ENCODE measurements at regions of chr3 and their contacts with region 1.

Region 1: DNA sequence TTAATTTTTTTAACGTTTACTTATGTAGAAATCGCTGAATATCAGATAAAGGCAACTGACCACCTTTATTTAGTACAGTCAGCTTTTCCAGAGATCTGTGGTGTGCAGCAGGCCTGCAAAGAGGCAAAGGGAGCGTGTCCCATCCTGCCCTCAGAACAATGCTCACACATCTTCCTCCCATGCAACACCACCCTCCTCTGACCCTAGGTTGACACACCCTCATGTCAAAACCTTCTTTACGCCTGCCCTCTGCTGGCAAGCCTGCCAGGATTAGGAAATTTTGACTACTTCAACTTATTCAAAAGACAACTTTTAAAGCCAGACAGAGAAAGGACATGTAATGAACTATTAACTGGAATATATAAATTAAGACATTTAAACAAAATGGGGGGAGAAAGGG is 513.7 kb downstream of the FOXP1 start:
- DNase-seq: peak; percentile 89
- H3K4me3 Mint-ChIP-seq: no peak overlapping the region
- H3K27ac Mint-ChIP-seq: no peak overlapping the region
- H3K4me1 Mint-ChIP-seq: peaks cover 57% of the 10 kb centered on the region
- H3K27me3 Mint-ChIP-seq: no peaks in the 10 kb centered on the region

Region 2: DNA sequence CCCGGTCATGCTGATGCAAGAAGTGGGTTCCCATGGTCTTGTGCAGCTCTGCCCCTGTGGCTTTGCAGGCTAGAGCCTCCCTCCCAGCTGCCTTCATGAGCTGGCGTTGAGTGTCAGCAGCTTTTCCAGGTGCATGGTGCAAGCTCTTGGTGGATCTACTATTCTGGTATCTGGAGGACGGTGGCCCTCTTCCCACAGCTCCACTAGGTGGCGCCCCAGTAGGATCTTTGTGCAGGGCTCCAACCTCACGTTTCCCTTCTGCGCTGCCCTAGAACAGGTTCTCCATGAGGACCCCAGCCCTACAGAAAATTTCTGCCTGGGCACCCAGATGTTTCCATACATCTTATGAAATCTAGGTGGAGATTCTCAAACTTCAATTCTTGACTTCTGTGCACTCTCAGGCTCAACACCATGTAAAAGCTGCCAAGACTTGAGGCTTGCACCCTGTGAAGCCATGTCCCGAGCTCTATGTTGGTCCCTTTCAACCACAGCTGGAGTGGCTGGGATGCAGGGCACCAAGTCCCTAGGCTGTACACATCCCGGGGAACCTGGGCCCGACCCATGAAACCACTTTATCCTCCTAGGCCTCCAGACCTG is 519.0 kb before region 1 on chr3:
- intact Hi-C with region 1: loop called (anchors 2 kb)
- DNase-seq: peak; percentile 90
- H3K4me3 Mint-ChIP-seq: no peak overlapping the region
- H3K27ac Mint-ChIP-seq: no peak overlapping the region
- H3K4me1 Mint-ChIP-seq: no peaks in the 10 kb centered on the region
- H3K27me3 Mint-ChIP-seq: peaks cover 12% of the 10 kb centered on the region

Region 3: DNA sequence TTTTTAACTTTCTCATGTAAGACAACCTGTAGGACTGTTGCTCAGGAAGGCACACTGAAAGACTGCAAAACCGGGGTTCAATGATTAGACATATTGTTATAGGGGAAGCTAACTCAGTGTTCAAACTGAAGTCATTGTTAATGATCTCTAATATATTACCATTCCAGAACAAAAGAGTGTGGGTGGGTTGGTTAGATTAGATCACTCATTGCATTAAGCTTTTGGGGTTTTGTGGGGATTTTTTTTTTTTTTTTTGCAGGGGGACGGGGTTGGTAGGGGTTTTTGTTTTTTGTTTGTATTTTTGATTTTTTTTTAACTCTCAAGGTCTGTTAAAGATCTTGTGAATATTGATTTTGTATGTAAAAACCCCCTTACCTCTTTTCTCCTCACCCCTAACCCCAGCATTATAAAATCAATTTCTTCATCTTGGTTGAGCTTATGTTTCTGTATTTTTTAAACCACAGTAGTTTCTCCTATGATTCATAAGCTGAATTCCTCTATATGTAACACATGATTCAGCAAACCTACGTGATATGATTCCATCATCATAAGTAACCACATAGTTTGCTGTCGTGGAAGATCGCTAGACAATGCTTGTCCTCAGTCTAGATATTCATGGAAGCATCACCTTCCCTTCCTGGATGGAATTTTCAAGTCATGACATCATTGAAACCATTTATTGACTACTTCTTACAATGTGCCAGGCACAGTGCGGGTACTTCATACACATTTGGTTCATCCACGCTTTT is 213.2 kb before region 1 on chr3:
- intact Hi-C with region 1: no loop called
- DNase-seq: no peak
- H3K4me3 Mint-ChIP-seq: no peak overlapping the region
- H3K27ac Mint-ChIP-seq: peak overlapping the region; percentile 54
- H3K4me1 Mint-ChIP-seq: peaks cover 12% of the 10 kb centered on the region
- H3K27me3 Mint-ChIP-seq: peaks cover 19% of the 10 kb centered on the region

Region 4: DNA sequence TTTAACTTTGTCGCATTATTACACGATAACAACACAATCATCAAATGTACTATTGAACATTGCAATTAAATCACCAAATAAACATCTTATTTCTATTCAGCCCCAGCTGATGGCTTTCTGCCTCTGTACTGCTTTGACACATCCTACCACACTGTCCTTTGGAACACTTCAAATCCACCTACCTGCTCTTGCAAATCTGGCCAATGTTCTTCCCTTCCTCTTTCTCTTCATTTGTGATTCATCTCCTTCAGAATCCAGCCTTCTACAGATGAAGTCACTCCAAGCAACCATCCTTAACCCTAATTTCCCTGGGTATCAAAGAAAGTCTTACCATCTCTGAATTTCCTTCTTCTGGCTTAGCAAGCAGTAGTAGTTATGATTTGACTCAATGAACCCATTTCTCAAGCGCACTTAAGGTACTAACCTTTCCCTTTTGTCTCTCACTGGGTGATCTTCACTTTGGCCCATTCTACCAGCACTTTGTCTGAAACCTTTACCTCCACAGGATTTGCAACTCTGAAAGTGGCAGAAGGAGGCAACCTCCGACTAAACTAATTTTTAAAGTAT is 10.8 kb after region 1 on chr3:
- intact Hi-C with region 1: loop called (anchors 1 kb)
- DNase-seq: no peak
- H3K4me3 Mint-ChIP-seq: peak overlapping the region; percentile 46
- H3K27ac Mint-ChIP-seq: peak overlapping the region; percentile 76
- H3K4me1 Mint-ChIP-seq: peaks cover 73% of the 10 kb centered on the region
- H3K27me3 Mint-ChIP-seq: no peaks in the 10 kb centered on the region

Region 5: DNA sequence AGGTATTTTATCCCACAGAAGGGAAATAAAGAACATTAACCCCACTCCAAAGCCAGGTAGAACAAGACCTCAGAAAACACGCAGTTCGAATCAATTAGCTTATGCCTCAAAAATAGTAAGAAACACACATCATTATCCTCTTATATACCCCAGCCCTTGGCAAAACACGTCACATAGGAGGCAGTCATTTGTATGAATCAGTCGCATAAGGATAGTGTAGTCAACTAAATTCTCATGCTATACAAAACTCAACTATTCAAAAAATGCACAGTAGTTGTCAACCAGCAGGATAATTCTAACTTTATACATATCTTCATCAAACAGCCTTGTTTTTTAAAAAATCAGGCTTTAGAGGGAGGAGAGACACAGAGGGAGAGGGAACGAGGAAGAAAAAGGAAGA is 215.3 kb after region 1 on chr3:
- intact Hi-C with region 1: no loop called
- DNase-seq: no peak
- H3K4me3 Mint-ChIP-seq: no peak overlapping the region
- H3K27ac Mint-ChIP-seq: no peak overlapping the region
- H3K4me1 Mint-ChIP-seq: no peaks in the 10 kb centered on the region
- H3K27me3 Mint-ChIP-seq: peaks cover 4% of the 10 kb centered on the region

Region 6: DNA sequence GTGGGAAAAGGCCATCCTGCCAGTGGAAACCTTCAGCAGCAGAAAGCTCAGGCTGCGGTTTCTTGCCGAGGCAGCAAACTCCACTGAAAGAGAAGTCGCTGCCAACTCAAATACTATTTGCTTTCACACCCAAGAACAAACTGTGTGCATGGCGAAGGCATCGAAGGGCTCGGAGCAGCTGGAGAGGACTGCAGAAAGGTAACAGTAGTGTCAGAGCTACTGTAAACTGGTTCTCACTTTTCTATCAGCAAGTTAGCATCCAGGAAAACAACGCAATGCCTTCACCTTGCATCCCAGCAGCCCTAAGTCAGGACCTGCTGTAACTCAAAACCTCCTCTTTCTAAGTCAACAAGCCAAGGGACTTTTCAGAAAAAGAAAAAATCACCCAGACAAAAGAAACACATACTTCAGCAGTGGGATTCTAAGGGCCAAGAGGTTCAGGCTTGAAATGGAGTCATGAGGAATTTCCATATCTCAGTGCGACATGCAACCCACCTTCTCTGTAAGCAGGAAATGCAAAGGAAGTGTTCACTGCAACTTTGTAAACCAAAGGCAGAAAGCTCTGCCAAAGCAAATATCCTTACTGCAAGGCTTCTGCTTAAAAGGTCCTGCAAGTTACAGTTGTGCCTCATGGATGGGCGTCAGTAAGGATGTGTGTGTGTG is 320.2 kb after region 1 on chr3:
- intact Hi-C with region 1: loop called (anchors 5 kb)
- DNase-seq: peak; percentile 69
- H3K4me3 Mint-ChIP-seq: peak overlapping the region; percentile 46
- H3K27ac Mint-ChIP-seq: peak overlapping the region; percentile 62
- H3K4me1 Mint-ChIP-seq: peaks cover 34% of the 10 kb centered on the region
- H3K27me3 Mint-ChIP-seq: peaks cover 31% of the 10 kb centered on the region

Measured in activated CD4-positive, alpha-beta T cell treated with anti-CD3 and anti-CD28 coated beads, Interleukin-2, amount 10 ng/mL, durations not matched to agents 24 days and 14 days (primary cell).